Vagina (tissue), 2 donors: ENCODE measurements at regions of chr6 and their contacts with region 1.

Region 1: GRCh38 chr6:31739639-31740396 is at the start of gene MSH5:
- DNase-seq: peak in 1 of 2 donors; percentile 99
- H3K4me3 ChIP-seq: peak within 1 kb of the TSS; percentile 65 to 86
- H3K27ac ChIP-seq: peak within 1 kb of the TSS; percentile 96
- H3K4me1 ChIP-seq: peaks cover 43% of the 10 kb centered on the region
- H3K27me3 ChIP-seq: no peaks in the 10 kb centered on the region
- CTCF ChIP-seq: no peak
- POLR2A ChIP-seq: peak in 1 of 2 donors; percentile 72
- total RNA-seq, gene MSH5: 11.0 TPM

Region 2: DNA sequence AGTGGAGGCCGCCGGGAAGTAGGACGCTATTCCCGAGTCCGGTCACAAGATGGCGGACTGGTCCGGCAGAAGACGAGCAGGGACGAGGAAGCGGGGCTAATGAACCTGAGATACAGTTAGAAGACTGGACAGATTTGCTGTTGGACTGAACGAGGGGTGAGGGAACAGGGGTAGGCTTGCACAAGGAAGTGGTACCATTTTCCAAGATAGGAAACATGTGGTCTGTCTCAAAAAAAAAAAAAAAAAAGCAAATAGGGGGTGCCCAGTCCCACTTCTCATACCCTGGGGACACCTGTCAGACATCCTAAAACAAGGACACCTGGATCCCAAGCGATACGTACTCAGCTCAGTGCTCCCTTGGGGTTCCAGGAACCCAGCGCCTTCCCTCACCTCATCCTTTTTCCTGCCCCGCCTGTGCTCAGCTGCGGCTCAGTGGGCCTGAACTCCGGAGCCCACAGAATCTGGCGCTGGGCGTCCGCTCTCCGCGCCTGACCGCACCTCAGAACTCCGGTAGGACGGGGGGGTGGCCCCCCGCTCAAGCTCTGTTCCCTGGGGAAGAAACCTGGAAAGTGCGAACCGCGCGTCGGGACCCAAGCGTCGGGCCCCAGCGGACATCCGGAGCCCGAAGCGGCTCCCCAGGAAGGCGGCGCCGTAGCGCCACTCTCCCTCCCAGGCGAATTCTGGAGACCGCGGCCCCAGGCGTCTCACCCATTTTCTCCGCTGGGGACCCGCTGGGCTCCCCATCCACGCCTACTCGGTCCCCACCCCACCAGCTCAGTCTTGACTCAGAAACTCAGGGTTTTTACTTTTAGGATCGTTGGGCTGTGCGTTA is 58.8 kb before region 1 on chr6 and contains the start of gene LY6G5C:
- intact Hi-C with region 1: loop called (anchors 10 kb)
- DNase-seq: peak in 1 of 2 donors; percentile 96
- H3K4me3 ChIP-seq: peak within 1 kb of the TSS; percentile 55 to 59
- H3K27ac ChIP-seq: peak within 1 kb of the TSS; percentile 92
- H3K4me1 ChIP-seq: peaks cover 25% of the 10 kb centered on the region
- H3K27me3 ChIP-seq: no peaks in the 10 kb centered on the region
- CTCF ChIP-seq: peak; percentile 50 to 69 (median 69)
- POLR2A ChIP-seq: no peak
- total RNA-seq, gene LY6G5C: 1.7 TPM

Region 3: GRCh38 chr6:31776989-31777666 is 37.3 kb after region 1 on chr6 and contains the start of gene VWA7:
- intact Hi-C with region 1: no loop called
- DNase-seq: peak in 1 of 2 donors; percentile 94
- H3K4me3 ChIP-seq: peak within 1 kb of the TSS in 1 of 2 donors; percentile 4
- H3K27ac ChIP-seq: peak within 1 kb of the TSS; percentile 51
- H3K4me1 ChIP-seq: peaks cover 11% of the 10 kb centered on the region
- H3K27me3 ChIP-seq: no peaks in the 10 kb centered on the region
- CTCF ChIP-seq: no peak
- POLR2A ChIP-seq: no peak
- total RNA-seq, gene VWA7: 0.74 TPM

Region 4: DNA sequence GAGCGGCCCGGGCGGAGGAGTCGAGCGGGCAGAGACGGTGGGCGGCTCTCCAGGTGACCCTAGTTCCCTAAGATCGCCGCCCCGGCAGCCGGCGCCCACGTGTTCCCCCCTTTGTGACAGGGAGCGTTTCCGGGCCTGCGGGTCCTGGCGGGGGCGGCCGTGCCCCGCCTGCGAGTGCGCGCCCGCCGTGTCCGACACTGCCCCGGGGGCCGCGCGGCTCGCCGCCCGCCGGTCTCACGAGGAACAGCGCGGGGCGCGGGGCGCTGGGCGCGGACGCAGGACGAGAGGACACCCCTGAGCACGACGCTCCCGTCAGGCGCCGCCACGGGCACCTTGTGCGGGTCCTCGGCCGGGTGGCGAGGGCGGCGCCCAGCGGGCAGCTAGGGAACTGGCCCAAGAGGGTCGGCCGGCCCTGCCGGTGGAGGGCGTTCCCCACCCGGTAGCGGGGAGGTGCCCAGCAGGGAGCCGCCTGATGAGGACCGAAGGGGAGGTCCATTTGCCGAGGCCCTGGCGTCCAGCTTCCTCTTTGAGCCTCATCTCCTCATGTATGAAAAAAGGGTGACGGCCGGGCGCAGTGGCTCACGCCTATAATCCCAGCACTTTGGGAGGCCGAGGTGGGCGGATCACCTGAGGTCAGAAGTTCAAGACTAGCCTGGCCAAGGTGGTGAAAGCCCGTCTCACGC is 55.9 kb after region 1 on chr6 and contains the start of gene VARS1:
- intact Hi-C with region 1: loop called (anchors 10 kb)
- DNase-seq: no peak
- H3K4me3 ChIP-seq: peak within 1 kb of the TSS; percentile 67 to 93
- H3K27ac ChIP-seq: peak within 1 kb of the TSS; percentile 97
- H3K4me1 ChIP-seq: peaks cover 26% of the 10 kb centered on the region
- H3K27me3 ChIP-seq: no peaks in the 10 kb centered on the region
- CTCF ChIP-seq: peak; percentile 12 to 78 (median 72)
- POLR2A ChIP-seq: peak in 1 of 2 donors; percentile 25
- total RNA-seq, gene VARS1: 39.8 TPM

Region 5: DNA sequence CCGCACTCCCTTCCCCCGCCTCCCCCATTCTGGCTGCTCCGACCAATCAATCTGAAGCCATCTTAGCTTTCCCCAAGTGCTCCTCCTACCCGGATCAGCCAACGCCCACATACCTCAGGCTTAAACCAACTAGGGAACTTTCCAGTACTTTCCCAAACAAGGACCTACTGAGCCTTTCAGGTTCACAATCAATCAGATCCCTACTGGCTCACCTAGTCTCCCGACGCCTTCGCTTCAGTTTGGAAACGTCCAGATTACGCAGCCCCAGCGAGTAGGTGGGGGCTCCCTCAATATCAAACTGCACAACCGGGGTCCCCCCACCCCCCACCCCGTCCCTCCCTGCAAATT is 74.8 kb after region 1 on chr6:
- intact Hi-C with region 1: loop called (anchors 5 kb)
- DNase-seq: peak in 1 of 2 donors; percentile 99
- H3K4me3 ChIP-seq: peak overlapping the region; percentile 59 to 73
- H3K27ac ChIP-seq: peak overlapping the region; percentile 100
- H3K4me1 ChIP-seq: peaks cover 37% of the 10 kb centered on the region
- H3K27me3 ChIP-seq: no peaks in the 10 kb centered on the region
- CTCF ChIP-seq: no peak
- POLR2A ChIP-seq: peak in 1 of 2 donors; percentile 79

Region 6: GRCh38 chr6:33417903-33418689 is 1678.3 kb after region 1 on chr6 and contains the start of gene CUTA:
- intact Hi-C with region 1: no loop called
- DNase-seq: peak; percentile 100
- H3K4me3 ChIP-seq: peak within 1 kb of the TSS; percentile 60 to 71
- H3K27ac ChIP-seq: peak within 1 kb of the TSS; percentile 98
- H3K4me1 ChIP-seq: peaks cover 54% of the 10 kb centered on the region
- H3K27me3 ChIP-seq: no peaks in the 10 kb centered on the region
- CTCF ChIP-seq: peak; percentile 24 to 42 (median 37)
- POLR2A ChIP-seq: peak in 1 of 2 donors; percentile 91
- total RNA-seq, gene CUTA: 73.2 TPM